ENCODE measurements at regions of chr3 and their contacts with region 1.

Region 1: DNA sequence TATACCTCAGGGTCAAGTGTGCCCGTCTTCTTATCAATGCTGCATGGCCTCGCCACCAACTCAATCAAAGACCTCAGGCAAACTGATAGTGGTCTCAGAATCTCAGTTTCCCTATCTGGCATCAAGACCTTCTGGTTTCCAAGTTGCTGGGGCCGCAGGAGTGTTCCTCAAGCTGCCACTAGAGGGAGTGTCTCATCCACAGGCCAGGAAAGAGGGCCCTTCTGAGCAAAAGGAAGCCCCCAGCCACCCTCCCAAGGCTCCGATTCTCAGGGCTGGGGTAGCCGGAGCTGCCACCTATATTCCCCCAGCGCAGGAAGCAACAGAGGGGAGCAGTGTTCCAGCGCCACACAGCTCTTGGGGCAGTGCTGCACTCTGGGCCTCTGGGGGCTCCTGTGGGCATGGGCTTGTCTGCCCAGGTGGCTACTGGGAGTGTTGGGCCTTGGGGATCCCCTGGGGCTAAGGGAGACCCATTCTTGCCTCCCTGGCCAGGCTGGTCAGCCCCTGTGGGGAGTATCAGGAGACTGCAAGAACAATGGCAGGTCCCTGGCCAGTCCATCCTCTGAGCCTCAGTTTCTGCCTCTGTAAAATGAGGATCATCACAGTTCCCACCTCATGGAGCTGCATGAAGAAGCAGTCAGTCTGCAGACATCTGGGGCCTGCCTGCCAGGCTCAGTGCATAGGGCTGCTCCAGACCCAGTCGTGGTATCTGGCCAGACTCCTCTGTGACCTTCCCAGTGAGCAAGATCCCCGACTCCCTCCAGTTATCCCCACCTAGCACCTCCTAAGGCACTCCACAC is 23.4 kb upstream of the SEC13 start:
- DNase-seq: peak; percentile 58
- ATAC-seq: no peak

Region 2: GRCh38 chr3:10570196-10570946 is 226.0 kb after region 1 on chr3:
- intact Hi-C with region 1: no loop called
- DNase-seq: peak; percentile 67
- ATAC-seq: peak; percentile 87

Region 3: DNA sequence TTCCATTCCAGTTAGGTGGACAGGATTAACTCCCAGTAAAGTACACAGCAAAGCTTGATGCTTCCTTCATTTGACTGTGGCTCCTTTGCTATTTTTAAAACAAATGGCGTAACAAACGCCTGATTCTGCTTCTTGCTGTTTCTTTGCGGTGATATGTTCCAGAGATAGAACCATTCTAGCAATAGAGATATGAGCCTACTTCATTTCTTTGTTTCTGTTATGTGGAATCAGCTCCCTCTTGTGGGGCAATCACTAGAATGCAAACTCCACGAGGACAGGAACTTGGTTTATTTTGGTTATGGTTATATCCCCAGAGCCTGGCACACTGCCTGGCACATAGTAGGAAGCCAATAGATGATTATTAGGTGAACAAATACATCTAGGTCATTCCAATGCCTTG is 349.1 kb after region 1 on chr3:
- intact Hi-C with region 1: loop called (anchors 2 kb)
- DNase-seq: no peak
- ATAC-seq: peak; percentile 64

Region 4: GRCh38 chr3:10738688-10739372 is 394.5 kb after region 1 on chr3:
- intact Hi-C with region 1: loop called (anchors 5 kb)
- DNase-seq: peak; percentile 81
- ATAC-seq: peak; percentile 66

Measured in Right ventricle myocardium superior (tissue), 1 donor.